ENCODE measurements at regions of chr9 and their contacts with region 1.

Region 1: GRCh38 chr9:37800631-37801286 is at the start of gene DCAF10:
- DNase-seq: peak; percentile 69 to 78 (median 77)
- H3K4me3 ChIP-seq: peak within 1 kb of the TSS; percentile 77 to 90 (median 85)
- H3K4me3 Mint-ChIP-seq: peak within 1 kb of the TSS; percentile 92 to 98
- H3K27ac ChIP-seq: peak within 1 kb of the TSS; percentile 23 to 83
- H3K27ac Mint-ChIP-seq: peak within 1 kb of the TSS; percentile 53 to 92 (median 79)
- H3K4me1 ChIP-seq: peaks cover 35 to 48% of the 10 kb centered on the region in 2 donors
- H3K4me1 Mint-ChIP-seq: peaks cover 43% of the 10 kb centered on the region
- H3K27me3 ChIP-seq: no peaks in the 10 kb centered on the region
- H3K27me3 Mint-ChIP-seq: peaks cover 0 to 1% (median 1%) of the 10 kb centered on the region in 3 donors
- CTCF ChIP-seq: no peak
- polyA plus RNA-seq, gene DCAF10: 12.4 to 17.2 (median 14.7) TPM

Region 2: GRCh38 chr9:37485389-37486219 is 315.2 kb before region 1 on chr9 and contains the start of gene POLR1E:
- intact Hi-C with region 1: loop called in 1 of 2 experiments (anchors 10 kb)
- DNase-seq: peak; percentile 91 to 94 (median 93)
- H3K4me3 ChIP-seq: peak within 1 kb of the TSS; percentile 66 to 85 (median 75)
- H3K4me3 Mint-ChIP-seq: peak within 1 kb of the TSS; percentile 88 to 93
- H3K27ac ChIP-seq: peak within 1 kb of the TSS in 1 of 2 donors; percentile 56
- H3K27ac Mint-ChIP-seq: peak within 1 kb of the TSS; percentile 57 to 92 (median 74)
- H3K4me1 ChIP-seq: peaks cover 15 to 24% of the 10 kb centered on the region in 2 donors
- H3K4me1 Mint-ChIP-seq: peaks cover 23% of the 10 kb centered on the region
- H3K27me3 ChIP-seq: peaks cover 0 to 2% of the 10 kb centered on the region in 2 donors
- H3K27me3 Mint-ChIP-seq: peaks cover 4 to 10% (median 6%) of the 10 kb centered on the region in 3 donors
- CTCF ChIP-seq: no peak
- polyA plus RNA-seq, gene POLR1E: 2.3 to 4.1 (median 2.4) TPM

Region 3: GRCh38 chr9:37582548-37583157 is 218.1 kb before region 1 on chr9:
- intact Hi-C with region 1: loop called in 1 of 2 experiments (anchors 10 kb)
- DNase-seq: peak in 2 of 3 donors; percentile 21 to 26
- H3K4me3 ChIP-seq: no peak overlapping the region
- H3K4me3 Mint-ChIP-seq: no peak overlapping the region
- H3K27ac ChIP-seq: no peak overlapping the region
- H3K27ac Mint-ChIP-seq: peak overlapping the region in 4 of 7 donors; percentile 34 to 66 (median 58)
- H3K4me1 ChIP-seq: no peaks in the 10 kb centered on the region
- H3K4me1 Mint-ChIP-seq: no peaks in the 10 kb centered on the region
- H3K27me3 ChIP-seq: no peaks in the 10 kb centered on the region
- H3K27me3 Mint-ChIP-seq: no peaks in the 10 kb centered on the region
- CTCF ChIP-seq: peak; percentile 74

Region 4: GRCh38 chr9:37592108-37592951 is 208.4 kb before region 1 on chr9 and contains the start of gene TOMM5:
- intact Hi-C with region 1: loop called (anchors 5 to 10 kb)
- DNase-seq: peak; percentile 86 to 93 (median 91)
- H3K4me3 ChIP-seq: peak within 1 kb of the TSS; percentile 63 to 94 (median 77)
- H3K4me3 Mint-ChIP-seq: peak within 1 kb of the TSS; percentile 98 to 99
- H3K27ac ChIP-seq: peak within 1 kb of the TSS; percentile 75 to 96
- H3K27ac Mint-ChIP-seq: peak within 1 kb of the TSS; percentile 94 to 98 (median 97)
- H3K4me1 ChIP-seq: peaks cover 28 to 32% of the 10 kb centered on the region in 2 donors
- H3K4me1 Mint-ChIP-seq: peaks cover 34% of the 10 kb centered on the region
- H3K27me3 ChIP-seq: peaks cover 0 to 4% of the 10 kb centered on the region in 2 donors
- H3K27me3 Mint-ChIP-seq: peaks cover 4 to 11% (median 7%) of the 10 kb centered on the region in 3 donors
- CTCF ChIP-seq: no peak
- polyA plus RNA-seq, gene TOMM5: 35.0 to 117 (median 112) TPM

Region 5: DNA sequence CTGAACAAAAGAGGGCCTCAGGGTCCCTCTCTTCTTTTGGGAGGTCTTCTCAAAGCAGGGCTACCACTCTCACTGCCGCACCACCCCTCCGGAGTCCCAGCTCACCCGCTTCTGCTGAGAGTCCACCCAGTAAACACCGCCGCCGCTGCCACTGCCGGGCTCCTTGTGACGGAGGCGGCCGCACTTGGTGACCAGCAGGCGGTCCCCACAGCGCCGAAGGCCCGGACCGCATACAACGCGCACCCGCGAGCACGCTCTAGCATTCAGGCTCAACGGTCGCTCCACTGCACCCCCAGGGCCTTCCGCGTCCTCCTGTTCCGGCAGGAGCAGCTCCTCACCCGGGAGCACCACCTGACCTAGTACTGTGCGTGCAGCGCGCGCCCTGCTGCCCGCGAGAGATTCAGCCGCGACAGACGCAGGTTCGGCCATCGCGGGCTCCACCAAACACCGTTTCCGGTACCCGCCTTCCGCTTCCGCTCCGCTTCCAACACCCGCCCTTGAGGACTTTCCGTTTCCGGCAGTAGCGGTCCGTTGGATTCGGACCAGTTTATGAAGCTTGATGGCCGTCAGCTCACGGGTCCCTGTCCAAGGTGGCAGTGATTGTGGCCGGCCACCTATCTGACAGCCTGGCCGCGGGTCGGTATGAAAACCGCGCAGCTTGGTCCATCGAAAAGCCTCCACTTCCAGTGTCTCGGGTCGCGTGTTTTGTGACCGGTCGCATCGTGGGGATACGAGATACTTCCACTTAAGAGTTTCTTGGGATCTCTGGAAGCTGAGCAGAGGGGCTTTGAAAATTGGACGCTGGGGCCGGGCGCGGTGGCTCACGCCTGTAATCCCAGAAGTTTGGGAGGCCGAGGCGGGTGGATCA is 15.9 kb before region 1 on chr9 and contains the start of gene EXOSC3:
- intact Hi-C with region 1: loop called in 1 of 2 experiments (anchors 1 kb)
- DNase-seq: peak; percentile 88 to 90 (median 90)
- H3K4me3 ChIP-seq: peak within 1 kb of the TSS; percentile 73 to 97 (median 84)
- H3K4me3 Mint-ChIP-seq: peak within 1 kb of the TSS; percentile 97 to 98
- H3K27ac ChIP-seq: peak within 1 kb of the TSS; percentile 82 to 89
- H3K27ac Mint-ChIP-seq: peak within 1 kb of the TSS; percentile 88 to 96 (median 95)
- H3K4me1 ChIP-seq: peaks cover 24 to 29% of the 10 kb centered on the region in 2 donors
- H3K4me1 Mint-ChIP-seq: peaks cover 31% of the 10 kb centered on the region
- H3K27me3 ChIP-seq: no peaks in the 10 kb centered on the region
- H3K27me3 Mint-ChIP-seq: peaks cover 2 to 10% (median 7%) of the 10 kb centered on the region in 3 donors
- CTCF ChIP-seq: no peak
- polyA plus RNA-seq, gene EXOSC3: 9.8 to 25.2 (median 19.6) TPM

Region 6: GRCh38 chr9:37903647-37904444 is 103.1 kb after region 1 on chr9 and contains the start of gene SLC25A51:
- intact Hi-C with region 1: loop called in 1 of 2 experiments (anchors 5 kb)
- DNase-seq: peak; percentile 86 to 93 (median 88)
- H3K4me3 ChIP-seq: peak within 1 kb of the TSS; percentile 50 to 93 (median 84)
- H3K4me3 Mint-ChIP-seq: peak within 1 kb of the TSS; percentile 83 to 90
- H3K27ac ChIP-seq: peak within 1 kb of the TSS; percentile 64 to 91
- H3K27ac Mint-ChIP-seq: peak within 1 kb of the TSS; percentile 84 to 94 (median 91)
- H3K4me1 ChIP-seq: peaks cover 26 to 39% of the 10 kb centered on the region in 2 donors
- H3K4me1 Mint-ChIP-seq: peaks cover 33% of the 10 kb centered on the region
- H3K27me3 ChIP-seq: no peaks in the 10 kb centered on the region
- H3K27me3 Mint-ChIP-seq: peaks cover 0 to 2% (median 2%) of the 10 kb centered on the region in 3 donors
- CTCF ChIP-seq: peak; percentile 92
- polyA plus RNA-seq, gene SLC25A51: 5.9 to 12.4 (median 8.9) TPM